WTC11 (cell line): ENCODE measurements at regions of chr6 and their contacts with region 1.

Region 1: GRCh38 chr6:31776989-31777666 is at the start of gene VWA7:
- DNase-seq: peak; percentile 35
- ATAC-seq: peak; percentile 44
- H3K4me3 Mint-ChIP-seq: no peak within 1 kb of the TSS
- H3K27ac Mint-ChIP-seq: peak within 1 kb of the TSS; percentile 68; the same call in 1 of the 2 replicates
- H3K4me1 Mint-ChIP-seq: 0 out of 2 replicates have a peak, but pooled peaks cover 2% of the 10 kb centered on the region
- H3K27me3 Mint-ChIP-seq: no peaks in the 10 kb centered on the region
- CTCF ChIP-seq: no peak
- total RNA-seq, gene VWA7: 1.2 to 1.8 TPM (median 1.4 TPM) in 3 replicates

Region 2: DNA sequence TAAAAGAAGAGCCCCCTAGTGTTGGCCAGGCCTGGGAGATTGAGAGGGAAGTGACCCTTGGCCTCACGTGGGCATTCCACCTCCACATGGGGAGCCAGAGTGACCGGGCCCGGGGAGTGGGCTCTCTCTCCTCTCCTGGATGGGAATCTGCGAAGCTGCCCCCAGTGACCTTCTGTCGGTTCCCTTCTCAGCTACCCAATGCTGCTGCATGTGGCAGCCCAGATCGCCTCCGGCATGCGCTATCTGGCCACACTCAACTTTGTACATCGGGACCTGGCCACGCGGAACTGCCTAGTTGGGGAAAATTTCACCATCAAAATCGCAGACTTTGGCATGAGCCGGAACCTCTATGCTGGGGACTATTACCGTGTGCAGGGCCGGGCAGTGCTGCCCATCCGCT is 879.2 kb before region 1 on chr6:
- CTCF ChIA-PET with region 1: no interaction called
- POLR2A ChIA-PET with region 1: no interaction called
- DNase-seq: no peak
- ATAC-seq: no peak
- H3K4me3 Mint-ChIP-seq: no peak overlapping the region
- H3K27ac Mint-ChIP-seq: no peak overlapping the region
- H3K4me1 Mint-ChIP-seq: peaks cover under 1% of the 10 kb centered on the region
- H3K27me3 Mint-ChIP-seq: no peaks in the 10 kb centered on the region
- CTCF ChIP-seq: no peak

Region 3: DNA sequence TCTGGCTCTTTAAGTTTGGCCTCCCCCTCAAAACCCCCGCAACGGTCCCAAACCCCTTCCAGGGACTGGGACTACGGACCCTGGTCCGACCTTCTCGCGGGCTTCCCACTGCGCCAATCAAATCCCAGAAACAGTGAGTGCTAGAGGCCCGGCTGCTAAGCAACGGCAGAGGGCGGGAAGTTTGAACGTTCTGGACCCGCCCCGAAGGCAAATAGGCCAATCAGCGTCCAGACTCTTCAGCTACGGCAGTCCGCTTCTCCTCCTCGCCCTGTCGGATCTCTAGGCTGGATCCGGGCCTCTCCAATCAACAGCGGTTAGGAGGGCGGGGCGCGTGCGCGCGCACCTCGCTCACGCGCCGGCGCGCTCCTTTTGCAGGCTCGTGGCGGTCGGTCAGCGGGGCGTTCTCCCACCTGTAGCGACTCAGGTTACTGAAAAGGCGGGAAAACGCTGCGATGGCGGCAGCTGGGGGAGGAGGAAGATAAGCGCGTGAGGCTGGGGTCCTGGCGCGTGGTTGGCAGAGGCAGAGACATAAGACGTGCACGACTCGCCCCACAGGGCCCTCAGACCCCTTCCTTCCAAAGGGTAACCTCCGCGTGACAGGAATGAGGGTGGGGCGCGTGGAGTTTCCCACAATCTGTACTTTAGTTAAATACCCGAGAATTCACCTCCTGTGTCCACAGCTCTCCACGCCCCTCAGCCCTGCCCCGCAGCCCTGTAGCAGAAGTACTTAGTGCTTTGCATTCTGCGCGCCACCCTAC is 37.3 kb before region 1 on chr6 and contains the start of gene MSH5:
- CTCF ChIA-PET with region 1: interaction called, 14 read pairs
- POLR2A ChIA-PET with region 1: no interaction called
- DNase-seq: peak; percentile 98
- ATAC-seq: peak; percentile 89
- H3K4me3 Mint-ChIP-seq: peak within 1 kb of the TSS; percentile 80
- H3K27ac Mint-ChIP-seq: peak within 1 kb of the TSS; percentile 85
- H3K4me1 Mint-ChIP-seq: peaks cover 42% of the 10 kb centered on the region
- H3K27me3 Mint-ChIP-seq: no peaks in the 10 kb centered on the region; the same call in 1 of the 2 replicates
- CTCF ChIP-seq: no peak
- total RNA-seq, gene MSH5: 43.1 to 62.3 TPM (median 56.1 TPM) in 3 replicates

Region 4: DNA sequence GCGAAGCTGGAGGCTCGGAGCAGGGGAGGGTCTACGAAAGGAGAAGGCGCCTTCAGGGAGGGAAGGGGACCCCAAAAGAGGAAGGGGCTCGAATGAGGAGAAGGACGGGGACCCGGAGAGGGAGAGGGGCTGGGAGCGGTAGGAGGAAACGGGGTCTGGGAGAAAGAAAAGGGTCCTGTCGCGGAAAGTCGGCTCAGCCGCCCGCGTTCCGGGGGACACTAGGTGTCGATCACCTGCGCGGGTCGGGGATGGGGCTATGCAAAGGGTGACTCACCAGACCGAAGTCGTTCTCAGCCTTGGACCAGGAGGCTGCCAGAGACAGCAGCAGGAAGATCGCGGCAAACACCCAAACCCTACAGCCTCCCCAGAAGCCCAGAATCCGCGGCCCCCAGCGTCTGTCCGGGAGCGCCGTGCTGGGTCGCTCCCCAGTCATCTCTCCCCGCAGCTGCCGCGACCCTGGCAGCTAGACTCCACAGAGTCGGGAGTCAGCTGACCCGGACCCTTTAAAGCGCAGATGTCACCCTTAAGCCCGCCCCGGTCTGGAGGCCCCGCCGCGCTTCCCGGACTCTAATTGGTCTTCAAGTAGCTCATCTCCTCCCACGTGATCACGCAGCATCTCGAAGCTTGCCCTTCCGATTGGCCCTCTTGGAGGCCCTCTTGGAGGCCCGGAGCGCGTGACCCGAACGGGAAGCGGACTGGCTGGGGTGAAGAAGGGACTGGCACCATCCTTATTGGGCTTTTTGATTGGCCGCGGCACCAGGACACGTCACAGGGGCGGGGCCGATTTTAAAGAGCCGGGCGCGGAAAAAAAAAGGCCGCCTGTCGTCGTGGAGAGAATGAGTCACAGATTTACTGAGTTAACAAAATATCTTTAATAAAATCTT is 85.5 kb after region 1 on chr6 and contains the start of gene NEU1:
- CTCF ChIA-PET with region 1: interaction called, 11 read pairs
- POLR2A ChIA-PET with region 1: no interaction called
- DNase-seq: peak; percentile 99
- ATAC-seq: peak; percentile 93
- H3K4me3 Mint-ChIP-seq: peak within 1 kb of the TSS; percentile 97
- H3K27ac Mint-ChIP-seq: peak within 1 kb of the TSS; percentile 99
- H3K4me1 Mint-ChIP-seq: peaks cover 19% of the 10 kb centered on the region
- H3K27me3 Mint-ChIP-seq: peaks cover 2% of the 10 kb centered on the region; the same call in 1 of the 2 replicates
- CTCF ChIP-seq: no peak
- total RNA-seq, gene NEU1: 42.6 to 44.8 TPM (median 42.8 TPM) in 3 replicates

Region 5: DNA sequence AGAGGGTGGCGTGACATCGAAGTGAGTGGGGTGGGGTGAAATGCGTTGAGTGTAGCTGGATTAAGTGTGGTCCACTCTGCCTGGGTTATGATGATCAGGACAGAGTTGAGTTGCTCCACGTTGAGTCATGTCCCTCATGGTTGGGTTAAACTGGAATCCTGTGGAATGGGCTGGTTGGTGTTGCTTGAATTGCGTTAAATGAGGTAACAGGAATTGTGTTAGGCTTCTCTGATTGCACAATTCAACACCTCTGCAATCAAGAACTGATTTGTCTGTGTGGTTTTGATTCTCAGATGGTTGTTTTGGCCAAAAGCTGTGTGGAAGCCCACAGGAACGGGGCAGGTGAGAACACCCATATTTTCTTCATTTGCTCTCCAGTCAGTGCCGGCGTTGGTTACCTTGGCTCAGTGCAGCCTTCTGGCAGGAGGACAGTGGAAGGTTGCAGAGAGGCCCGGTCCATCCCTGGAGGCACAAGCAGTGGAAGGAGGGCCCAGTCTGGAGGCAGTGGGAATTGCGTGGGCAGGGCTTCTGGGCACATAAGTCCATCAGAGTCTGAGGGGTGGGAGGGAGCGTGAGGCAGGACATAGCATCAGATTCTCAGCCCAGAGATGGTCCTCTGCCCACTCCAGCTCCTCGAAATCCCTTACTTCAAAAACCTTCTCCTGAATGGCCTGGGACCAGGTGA is 435.1 kb after region 1 on chr6:
- CTCF ChIA-PET with region 1: no interaction called
- POLR2A ChIA-PET with region 1: no interaction called
- DNase-seq: no peak
- ATAC-seq: no peak; the same call in 1 of the 2 replicates
- H3K4me3 Mint-ChIP-seq: no peak overlapping the region
- H3K27ac Mint-ChIP-seq: 0 out of 2 replicates have a peak overlapping the region, but pooled peaks have one; percentile 10
- H3K4me1 Mint-ChIP-seq: no peaks in the 10 kb centered on the region
- H3K27me3 Mint-ChIP-seq: peaks cover 4% of the 10 kb centered on the region; the same call in 1 of the 2 replicates
- CTCF ChIP-seq: no peak